Esophagus squamous epithelium (tissue), 5 donors: ENCODE measurements at regions of chr2 and their contacts with region 1.

Region 1: DNA sequence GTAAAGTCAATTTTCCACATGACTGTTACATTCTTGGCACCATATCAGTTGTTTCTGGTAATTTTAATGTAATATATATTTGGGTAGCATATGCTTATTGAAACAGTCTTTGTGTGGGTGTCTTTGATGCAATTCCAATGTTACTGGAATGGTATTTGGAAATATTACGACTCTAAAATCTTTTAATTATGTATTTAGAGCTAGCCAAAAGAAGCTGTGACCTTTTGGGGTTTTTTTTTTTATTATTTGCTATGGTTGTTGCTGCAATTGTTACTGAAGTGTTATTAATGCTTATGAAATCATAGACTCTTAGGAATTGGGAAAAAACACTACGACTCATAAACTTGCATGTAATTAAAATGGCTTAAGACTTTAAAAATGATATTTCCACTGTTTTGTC is 95.9 kb downstream of the AOX1 start:
- DNase-seq: no peak
- H3K4me3 ChIP-seq: no peak overlapping the region
- H3K27ac ChIP-seq: no peak overlapping the region
- H3K4me1 ChIP-seq: peaks cover 0 to 22% (median 7%) of the 10 kb centered on the region in 3 donors
- H3K27me3 ChIP-seq: no peaks in the 10 kb centered on the region
- CTCF ChIP-seq: no peak
- POLR2A ChIP-seq: no peak

Region 2: GRCh38 chr2:199870581-199870980 is 811.1 kb before region 1 on chr2:
- intact Hi-C with region 1: no loop called
- DNase-seq: no peak
- H3K4me3 ChIP-seq: no peak overlapping the region
- H3K27ac ChIP-seq: no peak overlapping the region
- H3K4me1 ChIP-seq: no peaks in the 10 kb centered on the region
- H3K27me3 ChIP-seq: peaks cover 0 to 3% (median 0%) of the 10 kb centered on the region in 4 donors
- CTCF ChIP-seq: no peak
- POLR2A ChIP-seq: no peak

Region 3: DNA sequence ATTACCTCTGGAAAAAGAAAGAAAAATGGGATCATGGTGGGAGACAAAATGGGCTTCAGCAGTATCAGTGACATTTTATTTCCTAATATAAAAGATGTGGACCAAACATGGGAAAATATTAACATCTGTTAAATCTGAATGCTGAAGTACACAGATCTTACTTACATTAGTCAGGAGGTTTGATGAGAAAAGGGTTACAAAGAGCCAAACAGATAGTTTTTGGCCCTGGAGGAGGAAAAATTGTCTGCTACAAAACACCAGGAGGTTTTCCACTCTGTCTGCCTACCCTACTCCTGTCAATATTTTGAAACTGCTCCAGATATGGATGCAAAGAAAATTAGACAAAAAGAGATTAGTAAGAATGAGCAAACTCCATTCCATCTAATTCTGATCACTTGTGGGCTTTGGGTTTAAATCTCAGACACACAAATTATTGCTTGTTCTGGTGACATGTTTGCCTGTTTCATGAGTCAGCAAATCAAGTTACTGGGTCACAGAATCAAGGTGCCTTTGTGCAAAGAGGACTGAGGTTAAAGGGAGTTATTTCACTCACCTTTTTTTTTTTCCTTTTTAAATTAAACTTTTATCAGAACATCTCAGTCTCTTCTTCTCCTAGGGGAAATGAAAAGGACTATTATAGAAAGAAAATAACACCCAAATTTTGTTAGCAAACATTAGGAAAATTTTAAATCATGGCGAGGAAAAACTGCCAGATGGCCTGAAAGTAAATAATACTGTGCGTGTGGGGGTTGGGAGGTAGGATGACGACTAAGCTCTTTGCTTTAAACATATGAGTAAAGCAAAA is 462.2 kb before region 1 on chr2:
- intact Hi-C with region 1: no loop called
- DNase-seq: no peak
- H3K4me3 ChIP-seq: no peak overlapping the region
- H3K27ac ChIP-seq: no peak overlapping the region
- H3K4me1 ChIP-seq: no peaks in the 10 kb centered on the region
- H3K27me3 ChIP-seq: no peaks in the 10 kb centered on the region
- CTCF ChIP-seq: no peak
- POLR2A ChIP-seq: no peak

Region 4: GRCh38 chr2:200658278-200658864 is 23.3 kb before region 1 on chr2:
- intact Hi-C with region 1: loop called (anchors 2 kb)
- DNase-seq: no peak
- H3K4me3 ChIP-seq: no peak overlapping the region
- H3K27ac ChIP-seq: no peak overlapping the region
- H3K4me1 ChIP-seq: no peaks in the 10 kb centered on the region
- H3K27me3 ChIP-seq: no peaks in the 10 kb centered on the region
- CTCF ChIP-seq: peak in 1 of 6 experiments; percentile 19
- POLR2A ChIP-seq: no peak

Region 5: GRCh38 chr2:201149064-201149820 is 467.5 kb after region 1 on chr2:
- intact Hi-C with region 1: no loop called
- DNase-seq: no peak
- H3K4me3 ChIP-seq: no peak overlapping the region
- H3K27ac ChIP-seq: peak overlapping the region; percentile 70 to 77 (median 73)
- H3K4me1 ChIP-seq: peaks cover 0 to 45% (median 31%) of the 10 kb centered on the region in 3 donors
- H3K27me3 ChIP-seq: no peaks in the 10 kb centered on the region
- CTCF ChIP-seq: no peak
- POLR2A ChIP-seq: no peak